Activated naive CD4-positive, alpha-beta T cell treated with anti-CD3 and anti-CD28 coated beads for 36 hours (primary cell): ENCODE measurements at regions of chr19 and their contacts with region 1.

Region 1: GRCh38 chr19:53906211-53907192 is 2.6 kb upstream of the CACNG7 start:
- DNase-seq: peak; percentile 69
- H3K4me3 Mint-ChIP-seq: no peak overlapping the region
- H3K27ac Mint-ChIP-seq: no peak overlapping the region
- H3K4me1 Mint-ChIP-seq: peaks cover 24% of the 10 kb centered on the region
- H3K27me3 Mint-ChIP-seq: peaks cover 69% of the 10 kb centered on the region

Region 2: GRCh38 chr19:53801257-53801656 is 105.2 kb before region 1 on chr19:
- CTCF ChIA-PET with region 1: no interaction called
- intact Hi-C with region 1: no loop called
- DNase-seq: no peak
- H3K4me3 Mint-ChIP-seq: no peak overlapping the region
- H3K27ac Mint-ChIP-seq: no peak overlapping the region
- H3K4me1 Mint-ChIP-seq: no peaks in the 10 kb centered on the region
- H3K27me3 Mint-ChIP-seq: no peaks in the 10 kb centered on the region

Region 3: DNA sequence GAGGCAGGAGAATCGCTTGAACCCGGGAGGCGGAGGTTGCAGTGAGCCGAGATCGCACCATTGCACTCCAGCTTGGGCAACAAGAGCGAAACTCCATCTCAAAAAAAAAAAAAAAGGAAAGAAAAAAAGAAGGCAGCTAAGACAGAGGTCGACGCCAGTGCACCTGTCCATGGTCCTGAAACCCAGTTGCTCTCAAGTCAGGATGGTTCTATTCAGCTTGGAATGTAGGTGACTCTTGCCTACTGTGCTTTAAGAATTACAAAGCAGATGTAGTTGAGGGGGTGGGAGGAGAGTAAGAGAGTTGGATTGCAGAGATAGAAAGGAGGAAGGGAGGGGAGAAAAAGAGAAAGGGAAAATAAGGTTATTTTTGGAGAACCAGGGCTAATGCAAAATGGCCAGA is 21.2 kb after region 1 on chr19:
- CTCF ChIA-PET with region 1: interaction called, 3 read pairs
- intact Hi-C with region 1: loop called (anchors 2 kb)
- DNase-seq: peak; percentile 62
- H3K4me3 Mint-ChIP-seq: no peak overlapping the region
- H3K27ac Mint-ChIP-seq: no peak overlapping the region
- H3K4me1 Mint-ChIP-seq: no peaks in the 10 kb centered on the region
- H3K27me3 Mint-ChIP-seq: peaks cover 3% of the 10 kb centered on the region

Region 4: DNA sequence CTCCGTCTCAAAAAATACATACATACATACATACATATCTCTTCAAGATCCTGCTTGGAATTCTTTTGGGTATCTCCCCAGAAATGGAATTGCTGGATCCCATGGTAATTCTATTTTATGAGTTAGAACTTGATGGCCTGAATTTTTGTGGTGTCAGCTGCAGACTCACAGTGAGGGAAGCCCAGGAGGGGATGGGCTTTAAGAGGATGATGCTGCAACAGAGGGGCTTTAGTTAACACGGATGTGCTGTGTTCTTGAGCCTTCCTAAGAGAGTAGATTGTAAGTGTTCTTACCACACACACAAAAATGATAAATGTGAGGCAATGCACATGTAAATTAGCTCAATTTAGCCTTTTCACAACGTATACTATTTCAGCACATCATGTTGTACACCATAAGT is 116.7 kb after region 1 on chr19:
- CTCF ChIA-PET with region 1: interaction called, 3 read pairs
- intact Hi-C with region 1: loop called (anchors 2 kb)
- DNase-seq: no peak
- H3K4me3 Mint-ChIP-seq: no peak overlapping the region
- H3K27ac Mint-ChIP-seq: no peak overlapping the region
- H3K4me1 Mint-ChIP-seq: peaks cover 2% of the 10 kb centered on the region
- H3K27me3 Mint-ChIP-seq: peaks cover 33% of the 10 kb centered on the region